MCF 10A (cell line): ENCODE measurements at regions of chr6 and their contacts with region 1.

Region 1: GRCh38 chr6:126176282-126176681 is 163.6 kb upstream of the CENPW start:
- DNase-seq: peak; percentile 48
- H3K4me3 Mint-ChIP-seq: no peak overlapping the region
- H3K27ac Mint-ChIP-seq: no peak overlapping the region
- H3K4me1 Mint-ChIP-seq: peaks cover 7% of the 10 kb centered on the region
- H3K27me3 Mint-ChIP-seq: no peaks in the 10 kb centered on the region
- CTCF ChIP-seq: peak; percentile 48

Region 2: GRCh38 chr6:126312013-126312663 is 135.9 kb after region 1 on chr6:
- CTCF ChIA-PET with region 1: no interaction called
- POLR2A ChIA-PET with region 1: no interaction called
- intact Hi-C with region 1: loop called (anchors 5 kb)
- DNase-seq: peak; percentile 51
- H3K4me3 Mint-ChIP-seq: no peak overlapping the region
- H3K27ac Mint-ChIP-seq: no peak overlapping the region
- H3K4me1 Mint-ChIP-seq: peaks cover 5% of the 10 kb centered on the region
- H3K27me3 Mint-ChIP-seq: no peaks in the 10 kb centered on the region
- CTCF ChIP-seq: peak; percentile 21

Region 3: DNA sequence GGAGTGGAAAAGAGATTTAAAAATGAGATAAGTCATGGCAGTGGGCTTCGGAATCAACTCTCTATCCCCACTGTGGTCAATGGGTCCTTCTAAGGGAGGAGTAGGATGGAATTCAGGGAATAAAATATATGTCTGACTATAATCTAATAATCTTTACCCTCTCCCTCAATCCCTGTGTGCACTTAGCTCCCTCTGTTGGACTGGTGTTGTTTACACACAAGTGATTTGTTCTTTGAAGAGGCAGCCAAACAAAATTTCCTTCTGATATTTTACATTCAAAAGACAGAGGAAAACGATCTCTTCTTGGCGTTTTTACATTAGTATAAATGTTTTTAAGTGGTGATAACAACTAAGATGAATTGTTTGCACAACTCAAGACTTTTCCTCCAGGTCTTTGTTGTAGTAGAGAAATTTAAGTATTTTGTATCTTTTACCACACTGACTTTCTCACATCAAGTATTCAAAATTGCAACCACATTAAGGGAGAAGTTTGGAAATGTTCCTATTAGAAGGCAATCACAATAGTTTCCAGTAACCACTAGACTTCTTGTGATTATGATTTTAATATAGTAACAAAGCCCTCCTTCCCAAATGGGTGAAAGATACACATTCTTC is 481.4 kb after region 1 on chr6:
- CTCF ChIA-PET with region 1: no interaction called
- POLR2A ChIA-PET with region 1: no interaction called
- intact Hi-C with region 1: loop called (anchors 1 kb)
- DNase-seq: peak; percentile 52
- H3K4me3 Mint-ChIP-seq: no peak overlapping the region
- H3K27ac Mint-ChIP-seq: no peak overlapping the region
- H3K4me1 Mint-ChIP-seq: no peaks in the 10 kb centered on the region
- H3K27me3 Mint-ChIP-seq: peaks cover 24% of the 10 kb centered on the region
- CTCF ChIP-seq: peak; percentile 66